Activated CD4-positive, alpha-beta memory T cell treated with anti-CD3 and anti-CD28 coated beads for 36 hours (primary cell): ENCODE measurements at regions of chr1 and their contacts with region 1.

Region 1: DNA sequence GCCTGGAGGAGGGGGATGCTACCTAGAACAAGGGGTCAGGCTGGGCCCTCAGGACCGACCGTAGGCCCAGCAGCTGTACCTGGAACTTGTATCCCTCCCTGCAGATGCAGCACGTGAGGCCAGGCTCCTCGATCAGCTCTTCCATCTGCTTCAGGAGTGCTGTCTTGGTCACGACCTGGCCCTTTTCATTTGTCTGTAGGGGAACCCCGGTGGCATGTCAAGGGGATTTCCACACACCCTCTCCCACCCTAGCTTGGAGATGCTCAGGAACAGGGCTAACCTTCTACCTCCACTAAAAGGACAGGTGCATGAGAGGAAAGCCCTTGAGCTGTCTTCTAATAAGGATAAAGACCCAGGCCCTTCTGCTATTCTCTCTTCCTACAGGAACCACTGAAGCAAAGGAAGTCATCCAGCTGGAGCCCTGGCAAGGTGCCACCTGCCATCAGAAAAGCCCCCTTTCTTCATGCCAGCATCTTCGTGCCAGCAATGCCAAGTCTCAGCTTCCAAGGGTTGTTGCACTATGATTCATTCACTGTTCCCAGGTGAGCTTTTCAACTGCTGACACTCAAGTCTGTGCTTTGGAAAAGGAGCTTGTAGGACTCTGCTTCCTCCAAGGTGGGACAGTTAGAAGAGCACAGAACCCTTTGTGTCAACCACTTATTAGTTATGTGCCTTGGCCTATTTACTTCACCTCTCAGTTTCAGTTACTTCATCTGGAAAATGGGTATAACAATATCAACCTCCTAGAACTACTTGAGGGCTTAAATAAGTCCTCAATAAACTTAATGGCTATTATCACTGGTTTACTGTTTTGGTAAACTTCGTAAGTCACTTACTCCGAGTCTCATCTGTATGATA is 122.1 kb downstream of the UBR4 start:
- DNase-seq: peak; percentile 37
- H3K4me3 Mint-ChIP-seq: no peak overlapping the region
- H3K27ac Mint-ChIP-seq: peak overlapping the region; percentile 69
- H3K4me1 Mint-ChIP-seq: peaks cover 29% of the 10 kb centered on the region
- H3K27me3 Mint-ChIP-seq: no peaks in the 10 kb centered on the region

Region 2: GRCh38 chr1:19074902-19075721 is 12.9 kb before region 1 on chr1:
- CTCF ChIA-PET with region 1: interaction called, 10 read pairs
- POLR2A ChIA-PET with region 1: interaction called, 3 read pairs
- intact Hi-C with region 1: no loop called
- DNase-seq: no peak
- H3K4me3 Mint-ChIP-seq: no peak overlapping the region
- H3K27ac Mint-ChIP-seq: peak overlapping the region; percentile 81
- H3K4me1 Mint-ChIP-seq: peaks cover 55% of the 10 kb centered on the region
- H3K27me3 Mint-ChIP-seq: no peaks in the 10 kb centered on the region

Region 3: DNA sequence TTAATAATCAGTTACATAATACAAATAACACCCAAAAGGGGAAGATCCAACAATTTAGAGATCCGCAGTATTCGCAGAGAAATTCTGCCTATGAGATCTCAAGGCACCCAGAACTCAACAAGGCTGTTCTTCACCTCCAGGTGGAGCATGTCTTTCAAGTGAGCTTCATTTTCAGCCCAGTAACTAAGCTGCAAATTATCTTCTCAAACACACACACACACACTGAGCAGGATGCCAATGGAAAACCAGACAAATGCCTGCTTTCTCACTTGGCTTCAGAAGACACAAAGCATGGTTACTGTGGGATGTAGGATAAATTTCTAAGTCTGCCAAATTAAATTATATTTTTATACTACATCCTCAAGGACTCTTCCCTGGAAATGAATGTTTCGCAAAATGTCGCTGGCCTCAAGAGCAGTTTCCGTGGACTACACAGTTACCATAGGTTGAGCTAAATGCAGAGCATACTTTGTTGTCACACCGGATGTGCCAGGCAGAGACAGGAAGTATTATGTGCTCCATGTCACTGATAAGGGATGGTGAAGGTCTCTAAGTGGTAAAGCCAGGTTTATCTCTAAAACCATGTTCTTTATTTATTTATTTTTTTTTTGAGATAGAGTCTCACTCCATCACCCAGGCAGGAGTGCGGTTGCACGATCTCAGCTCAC is 91.8 kb after region 1 on chr1:
- CTCF ChIA-PET with region 1: no interaction called
- POLR2A ChIA-PET with region 1: no interaction called
- intact Hi-C with region 1: no loop called
- DNase-seq: peak; percentile 34
- H3K4me3 Mint-ChIP-seq: no peak overlapping the region
- H3K27ac Mint-ChIP-seq: peak overlapping the region; percentile 26
- H3K4me1 Mint-ChIP-seq: peaks cover 16% of the 10 kb centered on the region
- H3K27me3 Mint-ChIP-seq: no peaks in the 10 kb centered on the region

Region 4: DNA sequence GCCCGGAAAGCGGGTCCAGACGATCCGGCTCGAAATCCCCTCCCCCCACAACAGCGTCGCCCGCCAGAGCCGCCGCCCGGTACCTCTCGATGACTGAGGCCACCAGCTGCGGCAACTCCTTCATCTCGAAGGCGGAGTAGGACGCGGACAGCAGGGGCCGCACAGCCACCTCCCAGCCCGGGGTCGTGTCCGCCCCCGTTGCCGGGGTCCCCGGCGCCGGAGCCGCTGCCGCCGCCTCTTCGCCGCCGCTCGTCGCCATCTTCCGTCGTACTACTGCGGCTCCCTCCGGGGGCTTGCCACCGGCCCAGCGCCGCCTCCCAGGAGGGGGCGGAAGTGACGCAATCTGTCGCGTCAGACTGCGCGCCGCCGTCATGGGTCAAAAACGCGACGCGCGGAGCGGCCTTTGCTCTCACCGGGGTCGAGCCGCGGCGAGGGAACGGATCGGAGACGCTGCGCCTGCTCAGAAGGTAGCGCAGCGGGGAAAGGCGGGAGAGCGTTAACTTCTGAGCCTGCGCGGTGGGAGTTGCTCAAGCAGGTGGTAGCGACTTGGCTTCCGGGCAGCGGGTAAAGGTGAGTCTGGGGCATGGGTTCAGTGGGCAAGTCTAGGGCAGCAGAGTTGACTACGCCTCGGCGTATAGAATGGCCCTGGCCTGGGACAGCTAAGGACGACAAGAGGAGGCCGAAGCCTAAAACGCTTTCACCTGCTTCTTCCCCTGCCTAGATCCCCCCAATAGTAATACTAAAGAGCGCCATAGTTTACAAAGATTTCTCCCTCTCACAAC is 122.2 kb after region 1 on chr1 and contains the start of gene UBR4:
- CTCF ChIA-PET with region 1: no interaction called
- POLR2A ChIA-PET with region 1: no interaction called
- intact Hi-C with region 1: no loop called
- DNase-seq: peak; percentile 98
- H3K4me3 Mint-ChIP-seq: peak within 1 kb of the TSS; percentile 94
- H3K27ac Mint-ChIP-seq: peak within 1 kb of the TSS; percentile 96
- H3K4me1 Mint-ChIP-seq: peaks cover 68% of the 10 kb centered on the region
- H3K27me3 Mint-ChIP-seq: no peaks in the 10 kb centered on the region
- total RNA-seq, gene UBR4: 104 to 116 TPM